Gastrocnemius medialis (tissue), 4 donors: ENCODE measurements at regions of chr7 and their contacts with region 1.

Region 1: DNA sequence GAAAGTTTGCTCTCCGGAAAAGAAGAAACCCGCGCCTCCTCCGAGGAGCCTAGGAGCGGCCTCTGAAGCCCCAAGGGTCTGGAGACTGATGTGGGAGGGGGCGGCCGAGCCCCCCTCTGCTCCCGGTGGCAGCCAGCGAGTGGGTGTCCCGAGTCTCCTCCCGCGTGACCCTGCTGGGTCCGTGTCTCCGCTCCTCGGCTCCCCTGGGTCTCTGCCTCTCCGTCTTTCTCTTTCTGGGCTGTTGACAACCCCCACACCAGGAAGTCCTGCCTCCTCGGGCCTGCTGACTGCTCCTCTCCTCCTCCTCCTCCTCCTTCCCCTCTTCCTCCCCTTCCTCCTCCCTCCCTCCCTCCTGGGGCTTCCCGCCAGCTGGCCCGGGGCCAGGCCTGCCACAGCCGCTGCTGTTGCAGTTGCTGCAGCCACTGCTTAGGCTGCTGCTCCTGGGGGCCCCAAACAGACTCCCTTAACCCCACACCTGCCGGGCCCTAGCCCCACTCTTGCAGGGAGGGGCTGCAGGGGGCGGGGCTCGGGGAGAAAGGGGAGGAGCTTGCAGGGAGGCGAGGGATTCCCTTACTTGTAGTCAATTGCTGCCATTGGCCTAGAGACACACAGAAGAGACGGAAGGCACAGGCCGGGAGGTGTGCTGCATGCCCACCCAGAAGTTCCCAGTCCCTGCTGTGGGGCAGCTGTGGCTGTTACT is at the start of gene TSC22D4:
- DNase-seq: peak; percentile 95
- ATAC-seq: peak; percentile 97 to 98
- H3K4me3 ChIP-seq: peak within 1 kb of the TSS; percentile 96 to 100 (median 98)
- H3K27ac ChIP-seq: peak within 1 kb of the TSS; percentile 90 to 99 (median 94)
- H3K4me1 ChIP-seq: peaks cover 33 to 36% of the 10 kb centered on the region in 2 donors
- H3K27me3 ChIP-seq: no peaks in the 10 kb centered on the region
- CTCF ChIP-seq: no peak
- POLR2A ChIP-seq: peak; percentile 79 to 90
- total RNA-seq, gene TSC22D4: 14.3 to 25.5 (median 21.2) TPM

Region 2: GRCh38 chr7:99576251-99576650 is 902.9 kb before region 1 on chr7:
- in situ Hi-C with region 1: no loop called
- intact Hi-C with region 1: no loop called
- DNase-seq: no peak
- ATAC-seq: no peak
- H3K4me3 ChIP-seq: no peak overlapping the region
- H3K27ac ChIP-seq: peak overlapping the region; percentile 72 to 81 (median 78)
- H3K4me1 ChIP-seq: peaks cover 26 to 27% of the 10 kb centered on the region in 2 donors
- H3K27me3 ChIP-seq: no peaks in the 10 kb centered on the region
- CTCF ChIP-seq: no peak
- POLR2A ChIP-seq: no peak

Region 3: DNA sequence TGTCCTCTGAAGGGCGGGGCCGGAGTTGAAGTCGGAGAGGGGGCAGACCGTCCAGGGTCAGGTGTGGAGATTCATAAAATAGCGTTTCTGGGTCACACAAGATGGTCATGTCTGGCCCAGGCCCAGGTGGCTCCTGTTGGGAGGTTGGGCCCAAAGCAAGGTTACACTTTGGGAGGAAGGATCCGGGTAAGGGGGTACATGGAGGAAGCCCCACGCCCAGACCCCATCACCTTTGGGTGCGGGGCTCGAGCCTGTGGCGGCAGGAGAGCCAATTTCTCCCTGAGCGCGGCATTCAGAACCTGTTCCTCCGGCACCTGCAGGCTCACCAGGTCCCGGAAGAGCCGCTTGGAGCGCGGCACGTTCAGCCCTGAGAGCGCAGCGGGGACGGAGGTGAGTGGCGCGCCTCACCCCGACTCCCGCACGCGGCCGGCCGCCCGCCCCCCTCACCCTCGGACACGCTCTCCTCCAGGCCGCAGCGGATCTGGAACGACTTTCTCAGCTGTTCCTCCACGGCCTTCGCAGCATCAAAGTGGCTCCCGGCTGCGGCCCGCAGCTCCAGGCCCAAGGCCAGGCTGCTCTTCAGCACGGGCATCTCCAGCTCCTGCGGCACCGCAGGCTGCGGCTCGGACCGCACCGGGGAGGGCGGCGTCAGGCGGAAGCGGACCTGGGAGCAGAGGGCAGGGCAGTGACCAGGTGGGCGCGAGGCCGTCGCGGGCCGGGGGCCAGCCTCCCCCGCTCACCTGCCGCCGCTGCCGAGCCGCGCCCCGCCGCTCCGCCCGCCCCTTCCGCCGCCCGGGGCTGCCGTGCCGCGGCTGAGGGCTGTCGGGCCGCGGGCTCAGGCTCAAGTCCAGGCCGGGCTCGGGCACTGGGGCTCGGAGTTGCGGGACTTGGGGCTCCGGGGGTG is 43.5 kb before region 1 on chr7:
- in situ Hi-C with region 1: no loop called
- intact Hi-C with region 1: loop called (anchors 2 kb)
- DNase-seq: no peak
- ATAC-seq: peak; percentile 33 to 42
- H3K4me3 ChIP-seq: peak overlapping the region; percentile 78 to 86 (median 81)
- H3K27ac ChIP-seq: peak overlapping the region; percentile 85 to 92 (median 90)
- H3K4me1 ChIP-seq: peaks cover 31% of the 10 kb centered on the region in 2 donors
- H3K27me3 ChIP-seq: no peaks in the 10 kb centered on the region
- CTCF ChIP-seq: no peak
- POLR2A ChIP-seq: no peak

Region 4: GRCh38 chr7:100538654-100539435 is 59.7 kb after region 1 on chr7 and contains the start of gene AGFG2:
- in situ Hi-C with region 1: loop called in 1 of 4 experiments (anchors 5 kb)
- intact Hi-C with region 1: loop called (anchors 2 kb)
- DNase-seq: peak; percentile 100
- ATAC-seq: peak; percentile 98
- H3K4me3 ChIP-seq: peak within 1 kb of the TSS; percentile 74 to 97 (median 82)
- H3K27ac ChIP-seq: peak within 1 kb of the TSS; percentile 60 to 85 (median 80)
- H3K4me1 ChIP-seq: peaks cover 8 to 20% of the 10 kb centered on the region in 2 donors
- H3K27me3 ChIP-seq: no peaks in the 10 kb centered on the region
- CTCF ChIP-seq: no peak
- POLR2A ChIP-seq: peak; percentile 39 to 53
- total RNA-seq, gene AGFG2: 10.7 to 16.4 (median 13.5) TPM

Region 5: GRCh38 chr7:100556541-100556940 is 77.4 kb after region 1 on chr7:
- in situ Hi-C with region 1: loop called in 3 of 4 experiments (anchors 5 to 25 kb)
- intact Hi-C with region 1: loop called (anchors 5 kb)
- DNase-seq: no peak
- ATAC-seq: no peak
- H3K4me3 ChIP-seq: no peak overlapping the region
- H3K27ac ChIP-seq: no peak overlapping the region
- H3K4me1 ChIP-seq: no peaks in the 10 kb centered on the region
- H3K27me3 ChIP-seq: no peaks in the 10 kb centered on the region
- CTCF ChIP-seq: no peak
- POLR2A ChIP-seq: no peak

Region 6: DNA sequence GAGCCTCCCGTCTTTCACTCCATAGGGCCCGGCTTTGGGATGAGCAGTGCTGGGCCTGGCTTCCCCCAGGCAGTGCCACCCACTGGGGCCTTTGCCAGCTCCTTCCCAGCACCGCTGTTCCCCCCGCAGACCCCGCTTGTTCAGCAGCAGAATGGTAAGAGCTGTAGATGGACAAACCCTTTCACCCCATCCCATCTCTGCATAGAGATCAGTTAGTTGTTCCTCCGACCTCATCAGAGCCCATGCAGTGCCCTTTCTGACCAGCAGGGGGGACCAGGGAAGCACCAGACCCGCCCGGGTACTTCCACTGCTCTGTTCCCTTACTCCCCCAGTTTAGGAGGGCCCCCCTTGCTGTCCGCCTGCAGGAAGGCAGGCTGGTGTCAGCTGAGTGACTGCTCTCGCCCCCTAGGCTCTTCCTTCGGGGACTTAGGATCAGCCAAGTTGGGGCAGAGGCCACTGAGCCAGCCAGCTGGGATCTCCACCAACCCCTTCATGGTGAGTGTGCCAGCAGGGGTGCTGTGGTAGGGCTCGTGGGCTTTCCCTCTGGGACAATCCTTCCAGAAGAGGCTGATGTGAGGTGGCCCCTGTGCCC is 84.8 kb after region 1 on chr7:
- in situ Hi-C with region 1: loop called in 3 of 4 experiments (anchors 5 to 25 kb)
- intact Hi-C with region 1: loop called (anchors 5 kb)
- DNase-seq: peak in 1 of 2 donors; percentile 59
- ATAC-seq: peak; percentile 33 to 59
- H3K4me3 ChIP-seq: no peak overlapping the region
- H3K27ac ChIP-seq: no peak overlapping the region
- H3K4me1 ChIP-seq: no peaks in the 10 kb centered on the region
- H3K27me3 ChIP-seq: no peaks in the 10 kb centered on the region
- CTCF ChIP-seq: peak; percentile 81 to 94 (median 89)
- POLR2A ChIP-seq: no peak

Region 7: DNA sequence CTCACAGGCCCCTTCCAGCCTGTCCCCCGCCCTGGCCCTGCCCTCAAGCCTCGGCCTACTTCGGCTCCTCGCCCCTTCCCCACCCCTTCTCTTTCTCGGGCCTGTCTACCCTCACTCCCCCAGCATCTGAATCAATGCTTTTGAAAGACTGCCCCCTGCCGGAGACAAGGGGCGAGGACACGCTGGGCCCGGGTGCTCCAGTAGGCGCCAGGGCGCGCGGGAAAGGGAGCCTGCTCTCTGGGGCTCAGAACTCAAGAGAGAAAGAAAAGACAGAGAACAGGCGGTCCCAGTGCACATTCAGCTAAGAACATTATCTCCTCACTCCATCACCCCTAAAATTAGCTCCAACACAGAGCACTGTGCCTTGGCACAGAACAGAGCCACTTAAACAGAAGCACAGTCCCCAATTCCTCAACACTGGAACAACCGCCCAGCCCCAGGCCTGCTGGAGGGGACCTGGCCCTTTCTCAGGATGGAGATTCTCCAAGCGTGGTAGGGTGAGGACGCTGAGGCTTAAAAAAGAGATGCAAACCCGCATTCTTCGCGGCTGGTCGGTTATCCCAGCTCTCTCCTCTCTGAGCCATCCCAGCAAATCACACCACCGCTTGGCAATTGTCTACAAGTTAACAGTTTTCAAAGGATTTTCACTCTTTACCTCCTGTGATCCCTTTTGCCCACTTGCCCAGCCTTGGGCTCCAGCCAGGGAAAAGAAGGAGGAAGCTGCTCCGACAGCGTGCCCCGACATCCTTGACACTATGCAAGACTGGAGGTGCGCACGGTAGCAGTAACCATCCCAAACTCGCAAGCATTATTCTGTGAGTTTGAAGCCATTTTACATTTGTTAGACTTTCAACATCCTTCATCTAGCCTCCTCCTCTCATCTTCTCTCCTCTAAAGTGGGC is 212.8 kb after region 1 on chr7:
- in situ Hi-C with region 1: loop called in 2 of 4 experiments (anchors 10 kb)
- intact Hi-C with region 1: no loop called
- DNase-seq: peak; percentile 59 to 68
- ATAC-seq: peak; percentile 55 to 73
- H3K4me3 ChIP-seq: peak overlapping the region; percentile 37 to 89 (median 71)
- H3K27ac ChIP-seq: peak overlapping the region; percentile 69 to 84 (median 77)
- H3K4me1 ChIP-seq: peaks cover 44 to 48% of the 10 kb centered on the region in 2 donors
- H3K27me3 ChIP-seq: no peaks in the 10 kb centered on the region
- CTCF ChIP-seq: peak; percentile 78 to 93 (median 89)
- POLR2A ChIP-seq: no peak